ENCODE measurements at regions of chr5 and their contacts with region 1.

Region 1: DNA sequence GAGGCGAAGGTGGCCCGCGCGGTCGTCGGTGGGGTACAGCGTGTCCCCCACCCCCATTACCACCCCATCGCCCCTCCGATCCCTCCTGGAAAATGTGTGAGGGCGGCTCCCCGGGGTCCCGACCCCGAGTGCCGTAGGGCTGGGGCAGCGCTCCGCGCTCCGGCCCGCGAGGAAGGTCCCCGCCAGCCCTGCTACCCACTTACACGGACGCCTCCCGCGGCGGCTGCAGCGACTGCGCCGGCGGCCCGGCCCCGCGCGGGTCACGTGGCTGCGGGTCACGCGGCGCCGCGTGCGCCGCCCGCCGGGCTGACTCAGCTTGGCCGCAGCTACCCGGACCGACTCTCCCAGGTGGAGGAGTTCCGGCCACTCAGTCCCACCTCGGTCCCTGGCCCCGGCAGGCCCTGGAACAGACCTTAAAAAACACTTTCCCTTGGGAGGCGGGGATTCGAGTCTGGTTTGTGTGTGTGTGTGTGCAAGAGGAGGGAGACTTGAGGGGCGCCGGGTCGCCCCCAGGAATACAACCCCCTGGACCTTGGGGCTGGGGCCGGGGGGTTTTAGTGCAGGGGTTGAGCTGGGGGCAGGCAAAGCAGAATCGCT is at the start of gene GNPDA1:
- DNase-seq: peak; percentile 50
- ATAC-seq: peak; percentile 91
- H3K4me3 ChIP-seq: peak within 1 kb of the TSS; percentile 66 to 82 (median 68); a peak in 5 of 6 replicates
- H3K27ac ChIP-seq: peak within 1 kb of the TSS; percentile 70
- H3K4me1 ChIP-seq: peaks cover 43% of the 10 kb centered on the region
- H3K27me3 ChIP-seq: peaks cover 0 to 5% of the 10 kb centered on the region in 2 experiments; a peak in 1 of 5 replicates
- CTCF ChIP-seq: no peak
- EP300 ChIP-seq: no peak
- POLR2A ChIP-seq: peak; percentile 69 to 79
- RAD21 ChIP-seq: 0 out of 2 replicates have a peak, but pooled peaks have one; percentile 50
- total RNA-seq, gene GNPDA1: 54.1 and 74.9 TPM in 2 replicates

Region 2: DNA sequence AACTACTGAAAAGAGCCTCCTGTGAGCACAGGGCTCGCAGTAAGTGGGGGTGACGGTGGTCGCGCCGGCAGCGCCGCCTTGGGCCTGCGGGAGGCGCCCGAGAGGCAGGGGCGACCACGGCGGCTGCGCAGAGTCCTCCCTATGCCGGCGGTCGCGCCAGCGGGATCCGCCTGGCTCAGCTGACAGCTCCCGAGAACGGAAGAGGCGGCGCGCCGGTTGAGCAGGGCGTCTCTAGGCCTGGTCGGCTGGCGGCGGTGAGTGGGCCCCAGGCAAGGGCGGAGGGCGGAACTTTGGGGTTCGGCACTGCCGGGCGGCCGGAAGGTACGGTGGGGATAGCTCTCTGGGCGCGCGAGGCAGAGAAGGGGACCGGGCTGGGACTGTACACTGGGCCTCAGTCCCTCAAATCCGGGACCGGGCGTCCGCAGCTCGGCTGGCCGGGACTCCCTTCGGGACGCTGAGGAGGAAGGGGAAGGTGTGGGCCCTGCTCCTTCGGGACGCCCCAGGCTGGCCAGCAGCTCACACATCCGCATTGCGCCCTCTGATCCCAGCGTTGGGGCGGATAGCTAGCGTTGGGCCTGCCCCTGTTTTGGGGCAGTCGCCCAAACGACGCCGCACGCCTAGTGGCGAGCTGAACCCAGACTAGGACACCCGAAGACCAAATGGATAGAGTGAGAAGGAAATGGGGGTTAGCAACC is 43.8 kb before region 1 on chr5 and contains the start of gene RNF14:
- CTCF ChIA-PET with region 1: no interaction called
- POLR2A ChIA-PET with region 1: interaction called, 12 read pairs
- in situ Hi-C with region 1: no loop called
- intact Hi-C with region 1: no loop called
- DNase-seq: peak; percentile 87
- ATAC-seq: peak; percentile 98
- H3K4me3 ChIP-seq: peak within 1 kb of the TSS; percentile 76 to 95 (median 89)
- H3K27ac ChIP-seq: peak within 1 kb of the TSS; percentile 87
- H3K4me1 ChIP-seq: peaks cover 49% of the 10 kb centered on the region
- H3K27me3 ChIP-seq: no peaks in the 10 kb centered on the region; a peak in 2 of 5 replicates
- CTCF ChIP-seq: peak; percentile 91
- EP300 ChIP-seq: peak; percentile 12 to 34; a peak in 2 of 4 replicates
- POLR2A ChIP-seq: peak; percentile 83 to 91
- RAD21 ChIP-seq: no peak; the same call in none of the 2 replicates
- total RNA-seq, gene RNF14: 28.1 and 42.4 TPM in 2 replicates

Region 3: GRCh38 chr5:141992349-141992963 is 20.4 kb before region 1 on chr5:
- CTCF ChIA-PET with region 1: interaction called, 9 read pairs
- POLR2A ChIA-PET with region 1: interaction called, 7 read pairs
- in situ Hi-C with region 1: no loop called
- intact Hi-C with region 1: loop called (anchors 2 kb)
- DNase-seq: peak; percentile 55
- ATAC-seq: peak; percentile 78
- H3K4me3 ChIP-seq: no peak overlapping the region
- H3K27ac ChIP-seq: no peak overlapping the region
- H3K4me1 ChIP-seq: peaks cover 4% of the 10 kb centered on the region
- H3K27me3 ChIP-seq: no peaks in the 10 kb centered on the region
- CTCF ChIP-seq: peak; percentile 74
- EP300 ChIP-seq: no peak
- POLR2A ChIP-seq: no peak
- RAD21 ChIP-seq: peak; percentile 48; the same call in 1 of the 2 replicates

Region 4: GRCh38 chr5:141997358-141997960 is 15.4 kb before region 1 on chr5:
- CTCF ChIA-PET with region 1: interaction called, 9 read pairs
- POLR2A ChIA-PET with region 1: interaction called, 10 read pairs
- in situ Hi-C with region 1: no loop called
- intact Hi-C with region 1: loop called (anchors 2 kb)
- DNase-seq: no peak
- ATAC-seq: peak; percentile 26; the same call in 1 of the 3 replicates
- H3K4me3 ChIP-seq: no peak overlapping the region
- H3K27ac ChIP-seq: no peak overlapping the region
- H3K4me1 ChIP-seq: peaks cover 11% of the 10 kb centered on the region
- H3K27me3 ChIP-seq: no peaks in the 10 kb centered on the region
- CTCF ChIP-seq: no peak
- EP300 ChIP-seq: no peak
- POLR2A ChIP-seq: no peak
- RAD21 ChIP-seq: no peak

Region 5: GRCh38 chr5:142024771-142025304 is 11.9 kb after region 1 on chr5:
- CTCF ChIA-PET with region 1: no interaction called
- POLR2A ChIA-PET with region 1: interaction called, 12 read pairs
- in situ Hi-C with region 1: no loop called
- intact Hi-C with region 1: no loop called
- DNase-seq: peak; percentile 72
- ATAC-seq: peak; percentile 100
- H3K4me3 ChIP-seq: peak overlapping the region; percentile 72 to 79 (median 75)
- H3K27ac ChIP-seq: peak overlapping the region; percentile 77
- H3K4me1 ChIP-seq: peaks cover 16% of the 10 kb centered on the region
- H3K27me3 ChIP-seq: peaks cover 0 to 6% of the 10 kb centered on the region in 2 experiments; a peak in 2 of 5 replicates
- CTCF ChIP-seq: no peak
- EP300 ChIP-seq: 0 out of 4 replicates have a peak, but pooled peaks of 1 of the 2 experiments have one; percentile 9
- POLR2A ChIP-seq: no peak
- RAD21 ChIP-seq: no peak

Region 6: DNA sequence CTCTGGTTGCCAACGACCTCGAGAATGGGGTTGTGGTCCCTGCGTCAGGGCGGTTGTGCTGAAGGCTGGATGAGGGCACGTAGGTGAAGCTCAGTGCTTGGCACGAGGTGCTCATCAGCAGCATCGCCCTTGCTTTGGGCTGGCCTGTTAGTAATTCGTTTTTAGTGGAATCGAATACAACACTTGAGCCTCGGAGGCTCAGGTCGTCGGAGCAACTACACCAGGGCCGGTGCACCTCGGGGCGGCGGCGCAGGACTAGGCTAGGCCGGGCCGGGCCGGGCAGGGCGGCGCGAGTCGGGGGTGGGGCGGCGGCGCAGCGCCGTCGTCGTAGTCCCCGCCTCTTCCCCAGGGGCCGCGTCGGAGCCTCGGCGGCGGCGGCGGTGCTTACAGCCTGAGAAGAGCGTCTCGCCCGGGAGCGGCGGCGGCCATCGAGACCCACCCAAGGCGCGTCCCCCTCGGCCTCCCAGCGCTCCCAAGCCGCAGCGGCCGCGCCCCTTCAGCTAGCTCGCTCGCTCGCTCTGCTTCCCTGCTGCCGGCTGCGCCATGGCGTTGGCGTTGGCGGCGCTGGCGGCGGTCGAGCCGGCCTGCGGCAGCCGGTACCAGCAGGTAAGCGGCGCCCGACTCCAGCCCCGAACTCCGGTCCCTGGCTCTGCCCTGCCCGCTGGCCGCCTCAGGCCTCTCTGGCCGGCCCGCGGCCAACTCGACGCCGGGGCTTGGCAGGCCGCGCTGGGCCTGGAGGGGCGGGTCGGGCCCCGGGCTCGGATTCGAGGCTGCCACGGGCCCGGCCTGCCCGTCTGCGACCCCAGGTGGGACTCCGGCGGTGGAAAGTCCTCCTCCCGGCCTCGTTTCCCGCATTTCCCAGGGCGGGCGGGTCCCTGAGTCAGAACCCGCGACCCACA is 95.8 kb after region 1 on chr5 and contains the start of gene NDFIP1:
- CTCF ChIA-PET with region 1: no interaction called
- POLR2A ChIA-PET with region 1: no interaction called
- in situ Hi-C with region 1: no loop called
- intact Hi-C with region 1: loop called (anchors 1 kb)
- DNase-seq: peak; percentile 54
- ATAC-seq: peak; percentile 98
- H3K4me3 ChIP-seq: peak within 1 kb of the TSS; percentile 82 to 88 (median 87)
- H3K27ac ChIP-seq: peak within 1 kb of the TSS; percentile 73
- H3K4me1 ChIP-seq: peaks cover 26% of the 10 kb centered on the region
- H3K27me3 ChIP-seq: peaks cover 0 to 14% of the 10 kb centered on the region in 2 experiments; a peak in 4 of 5 replicates
- CTCF ChIP-seq: peak; percentile 16; the same call in 1 of the 2 replicates
- EP300 ChIP-seq: no peak
- POLR2A ChIP-seq: peak; percentile 73 to 89
- RAD21 ChIP-seq: no peak; the same call in 1 of the 2 replicates
- total RNA-seq, gene NDFIP1: 11.9 and 15.7 TPM in 2 replicates

Measured in HepG2 (cell line).